ENCODE measurements at regions of chr16 and their contacts with region 1.

Region 1: GRCh38 chr16:46607529-46607928 is 13.7 kb downstream of the SHCBP1 start:
- DNase-seq: no peak
- H3K4me3 ChIP-seq: no peak overlapping the region
- H3K27ac ChIP-seq: no peak overlapping the region
- H3K4me1 ChIP-seq: peaks cover 0 to 10% (median 0%) of the 10 kb centered on the region in 6 donors
- H3K27me3 ChIP-seq: no peaks in the 10 kb centered on the region
- CTCF ChIP-seq: peak in 7 of 11 experiments; percentile 37 to 50 (median 47)
- POLR2A ChIP-seq: no peak

Region 2: DNA sequence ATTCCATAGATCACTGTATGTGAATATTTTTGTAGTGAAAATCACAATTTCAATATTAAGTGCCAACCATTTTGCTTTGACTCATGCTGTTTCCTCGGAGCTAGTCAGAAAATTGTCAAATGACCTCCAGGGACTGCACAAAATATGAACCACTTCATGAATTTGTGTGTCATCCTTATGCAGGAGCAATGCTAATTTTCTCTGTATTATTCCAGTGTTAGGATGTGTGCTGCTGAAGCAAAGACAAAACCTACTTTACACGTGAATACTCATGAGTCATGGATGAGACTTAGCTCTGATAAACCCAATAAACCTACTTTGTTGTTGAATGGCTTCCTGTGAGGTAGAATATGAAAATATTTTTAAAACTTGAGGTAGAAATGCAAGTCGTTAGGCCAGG is 51.6 kb before region 1 on chr16:
- intact Hi-C with region 1: loop called (anchors 10 kb)
- DNase-seq: no peak
- H3K4me3 ChIP-seq: no peak overlapping the region
- H3K27ac ChIP-seq: no peak overlapping the region
- H3K4me1 ChIP-seq: peaks cover 0 to 5% (median 2%) of the 10 kb centered on the region in 6 donors
- H3K27me3 ChIP-seq: peaks cover 0 to 7% (median 0%) of the 10 kb centered on the region in 7 donors
- CTCF ChIP-seq: no peak
- POLR2A ChIP-seq: no peak

Region 3: DNA sequence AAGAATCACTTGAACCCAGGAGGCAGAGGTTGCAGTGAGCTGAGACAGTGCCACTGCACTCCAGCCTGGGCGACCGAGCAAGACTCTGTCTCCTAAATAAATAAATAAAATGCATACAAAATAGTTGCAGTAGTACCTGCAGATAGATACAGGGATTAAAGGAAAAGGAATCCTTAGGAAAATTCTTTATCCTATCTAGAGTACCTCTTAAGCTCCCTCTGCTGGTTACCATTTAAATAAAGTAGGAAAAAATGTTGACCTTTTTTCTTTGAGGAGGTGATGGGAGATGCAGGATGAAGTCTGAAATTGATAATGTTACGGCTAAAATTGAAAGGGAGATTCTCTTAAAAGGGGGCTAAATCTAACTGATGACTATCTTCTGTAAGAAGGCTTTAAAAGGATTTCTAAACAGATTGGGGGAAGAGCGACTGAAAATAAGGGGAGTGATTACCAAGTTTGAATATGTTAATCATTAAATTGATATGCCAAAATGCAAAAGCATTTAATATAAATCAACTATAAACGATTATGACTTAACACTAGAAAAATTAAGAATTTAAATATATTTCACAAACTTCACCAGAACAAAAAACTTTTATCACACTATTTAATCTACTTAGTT is 194.0 kb after region 1 on chr16:
- intact Hi-C with region 1: no loop called
- DNase-seq: no peak
- H3K4me3 ChIP-seq: no peak overlapping the region
- H3K27ac ChIP-seq: no peak overlapping the region
- H3K4me1 ChIP-seq: no peaks in the 10 kb centered on the region
- H3K27me3 ChIP-seq: no peaks in the 10 kb centered on the region
- CTCF ChIP-seq: peak in 3 of 11 experiments; percentile 15 to 25 (median 20)
- POLR2A ChIP-seq: no peak

Measured in spleen (tissue), 13 donors.